ENCODE measurements at regions of chr10 and their contacts with region 1.

Region 1: DNA sequence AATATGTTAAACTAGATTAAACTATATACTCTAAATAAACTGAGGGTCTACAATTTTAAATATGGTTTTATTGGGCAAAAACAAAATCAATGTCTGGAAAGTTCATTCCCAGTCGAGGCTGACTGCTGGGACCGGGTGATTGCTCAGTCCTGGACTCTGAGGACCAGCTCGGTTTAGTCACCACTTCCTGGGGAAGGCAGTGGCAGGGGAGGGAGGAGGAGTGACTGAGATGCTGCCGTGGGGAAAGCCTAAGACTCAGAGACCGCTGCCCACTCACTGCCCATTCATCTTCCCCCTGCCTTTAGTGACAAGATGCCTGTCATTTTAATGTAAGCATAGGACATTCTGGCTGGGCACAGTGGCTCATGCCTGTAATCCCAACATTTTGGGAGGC is 29.0 kb downstream of the ATOH7 start:
- DNase-seq: peak; percentile 79
- ATAC-seq: peak; percentile 99
- H3K4me3 ChIP-seq: no peak overlapping the region
- H3K27ac ChIP-seq: no peak overlapping the region
- H3K4me1 ChIP-seq: 0 out of 2 replicates have a peak, but pooled peaks cover 5% of the 10 kb centered on the region
- H3K27me3 ChIP-seq: no peaks in the 10 kb centered on the region
- CTCF ChIP-seq: no peak

Region 2: DNA sequence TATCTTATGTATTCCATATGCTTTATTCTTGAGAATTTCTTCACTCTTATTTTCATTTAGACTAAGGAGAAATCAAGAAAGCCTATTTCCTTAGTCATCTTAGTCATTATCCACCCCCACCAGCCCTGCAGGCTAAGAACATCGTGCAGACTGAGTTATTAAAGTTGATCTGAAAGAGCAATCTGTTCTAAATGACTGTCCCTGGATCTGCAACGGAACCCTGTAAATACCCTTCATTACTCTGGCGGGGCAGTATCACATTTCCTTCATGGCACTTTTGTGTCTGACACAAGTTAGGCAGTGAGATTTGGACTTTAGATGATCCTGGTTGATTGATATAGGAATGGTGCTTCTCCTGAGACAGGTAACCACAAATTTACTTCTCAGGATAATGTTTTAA is 97.1 kb before region 1 on chr10:
- CTCF ChIA-PET with region 1: interaction called, 3 read pairs
- POLR2A ChIA-PET with region 1: interaction called, 12 read pairs
- intact Hi-C with region 1: no loop called
- DNase-seq: peak; percentile 93
- ATAC-seq: peak; percentile 46
- H3K4me3 ChIP-seq: peak overlapping the region; percentile 42
- H3K27ac ChIP-seq: peak overlapping the region; percentile 83
- H3K4me1 ChIP-seq: peaks cover 69% of the 10 kb centered on the region
- H3K27me3 ChIP-seq: no peaks in the 10 kb centered on the region
- CTCF ChIP-seq: no peak

Region 3: GRCh38 chr10:68233045-68233444 is 30.1 kb after region 1 on chr10:
- CTCF ChIA-PET with region 1: no interaction called
- POLR2A ChIA-PET with region 1: no interaction called
- intact Hi-C with region 1: no loop called
- DNase-seq: no peak
- ATAC-seq: no peak
- H3K4me3 ChIP-seq: no peak overlapping the region
- H3K27ac ChIP-seq: no peak overlapping the region
- H3K4me1 ChIP-seq: peaks cover 19% of the 10 kb centered on the region
- H3K27me3 ChIP-seq: no peaks in the 10 kb centered on the region
- CTCF ChIP-seq: no peak

Region 4: DNA sequence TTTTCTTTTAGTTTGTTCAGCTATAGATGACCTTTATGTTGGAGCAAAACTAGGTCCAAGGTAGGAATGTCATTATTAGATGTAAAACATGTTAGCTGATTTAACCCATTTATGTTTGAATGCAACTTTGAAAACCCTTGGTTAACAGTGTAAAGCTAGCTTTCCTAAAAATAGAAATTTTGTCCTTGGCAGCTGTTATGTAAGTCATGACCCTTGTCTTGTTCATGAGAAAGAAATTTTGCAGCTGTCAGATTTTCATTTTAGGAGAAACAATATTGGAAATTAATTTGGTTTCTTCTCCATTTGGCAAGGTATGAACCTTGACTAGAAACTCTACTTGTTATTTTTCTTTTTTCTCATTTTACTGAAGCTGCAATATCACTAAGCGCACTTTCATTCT is 494.1 kb after region 1 on chr10:
- CTCF ChIA-PET with region 1: no interaction called
- POLR2A ChIA-PET with region 1: no interaction called
- intact Hi-C with region 1: no loop called
- DNase-seq: no peak
- ATAC-seq: no peak
- H3K4me3 ChIP-seq: no peak overlapping the region
- H3K27ac ChIP-seq: no peak overlapping the region
- H3K4me1 ChIP-seq: no peaks in the 10 kb centered on the region
- H3K27me3 ChIP-seq: no peaks in the 10 kb centered on the region
- CTCF ChIP-seq: no peak

Measured in PC-3 (cell line).